ENCODE measurements at regions of chr15 and their contacts with region 1.

Region 1: DNA sequence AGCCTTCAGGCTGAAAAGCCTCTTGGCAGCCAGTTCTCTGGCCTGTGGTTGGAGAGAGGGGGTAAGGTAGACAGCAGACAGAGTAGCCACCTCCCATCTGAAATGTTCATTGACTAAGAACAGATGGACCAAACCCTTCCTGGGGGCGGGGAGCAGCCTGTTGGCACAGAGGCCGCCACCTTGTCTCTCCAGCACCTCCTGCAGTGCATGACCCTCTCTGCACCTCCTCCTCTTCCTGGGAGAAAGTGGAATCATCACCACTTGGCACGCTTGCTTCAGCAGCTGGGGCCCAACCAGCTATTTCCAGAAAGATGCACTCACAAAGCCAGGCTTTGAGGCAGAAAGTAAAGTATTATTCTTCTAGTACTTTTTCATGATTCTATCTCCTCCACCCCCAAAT is 313.4 kb upstream of the CHRM5 start:
- DNase-seq: no peak
- ATAC-seq: no peak
- H3K4me3 ChIP-seq: no peak overlapping the region
- H3K4me3 Mint-ChIP-seq: no peak overlapping the region
- H3K27ac ChIP-seq: no peak overlapping the region
- H3K27ac Mint-ChIP-seq: no peak overlapping the region
- H3K4me1 ChIP-seq: no peaks in the 10 kb centered on the region
- H3K4me1 Mint-ChIP-seq: no peaks in the 10 kb centered on the region
- H3K27me3 ChIP-seq: no peaks in the 10 kb centered on the region
- H3K27me3 Mint-ChIP-seq: no peaks in the 10 kb centered on the region
- CTCF ChIP-seq: no peak

Region 2: DNA sequence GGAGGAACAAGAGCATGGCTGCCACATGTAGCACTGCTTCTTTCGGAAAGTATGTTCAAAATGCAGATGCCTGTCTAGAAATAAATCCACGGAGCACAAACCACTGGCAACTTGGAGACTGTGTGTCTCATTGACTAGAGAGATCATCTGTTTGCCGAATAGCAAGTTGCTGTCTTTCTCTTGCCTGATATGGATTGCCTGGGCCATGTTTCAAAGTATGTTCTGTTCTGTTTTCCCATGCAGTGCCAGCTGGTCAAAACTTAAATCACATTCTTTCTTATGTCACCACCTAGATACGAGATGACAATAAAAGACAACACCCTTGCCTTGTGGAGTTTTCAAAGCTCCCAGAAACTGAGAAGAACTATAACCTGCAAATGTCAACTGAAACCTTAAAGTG is 25.2 kb before region 1 on chr15:
- intact Hi-C with region 1: loop called (anchors 2 kb)
- DNase-seq: no peak
- ATAC-seq: no peak
- H3K4me3 ChIP-seq: no peak overlapping the region
- H3K4me3 Mint-ChIP-seq: no peak overlapping the region
- H3K27ac ChIP-seq: no peak overlapping the region
- H3K27ac Mint-ChIP-seq: no peak overlapping the region
- H3K4me1 ChIP-seq: no peaks in the 10 kb centered on the region
- H3K4me1 Mint-ChIP-seq: no peaks in the 10 kb centered on the region
- H3K27me3 ChIP-seq: no peaks in the 10 kb centered on the region
- H3K27me3 Mint-ChIP-seq: peaks cover 12 to 13% of the 10 kb centered on the region in 2 donors
- CTCF ChIP-seq: no peak